ENCODE measurements at regions of chr6 and their contacts with region 1.

Region 1: DNA sequence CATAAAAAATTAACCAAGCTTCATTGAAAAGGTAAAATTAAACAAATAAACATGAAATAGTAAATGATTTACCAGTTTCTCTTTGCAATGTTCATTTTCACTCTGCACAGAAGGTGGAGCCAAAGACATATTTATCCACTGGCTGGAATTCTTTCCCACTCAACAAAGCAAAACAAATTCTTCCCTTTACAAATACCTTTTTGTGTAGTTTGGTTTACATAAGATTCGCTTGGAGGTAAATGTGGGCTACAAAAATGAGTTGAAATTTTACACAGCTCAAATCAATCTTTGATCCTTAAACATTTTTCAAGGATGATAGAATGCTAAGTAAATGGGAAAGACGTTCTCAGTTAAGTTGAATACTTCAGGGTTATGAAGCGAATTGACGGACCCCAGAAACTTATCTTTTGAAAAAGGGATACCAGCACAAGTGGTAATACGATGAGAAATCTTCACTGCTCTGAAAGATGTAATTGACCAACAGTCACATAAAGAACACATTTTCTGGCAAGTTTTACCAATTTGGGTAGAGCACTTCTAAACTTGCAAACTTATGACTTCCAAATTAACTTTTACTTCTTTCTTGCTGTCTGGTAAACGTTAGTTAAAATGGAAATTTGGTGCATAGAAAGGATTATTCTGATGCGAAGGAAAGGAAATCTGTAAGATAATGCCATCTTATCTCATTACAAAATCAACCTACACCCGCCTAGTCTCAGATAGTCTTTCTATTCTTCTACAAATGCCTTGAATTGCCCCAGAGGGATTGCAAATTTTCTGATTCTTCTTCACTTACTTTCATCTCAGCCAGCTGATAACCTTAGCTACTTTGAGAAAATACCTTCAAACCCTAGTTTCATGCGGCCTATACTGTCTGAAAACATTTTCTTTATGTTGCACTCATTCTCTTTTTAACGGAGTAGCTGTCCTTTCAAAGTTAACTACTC is 4.7 kb upstream of the GJA1 start:
- DNase-seq: no peak
- H3K4me3 ChIP-seq: no peak overlapping the region
- H3K27ac ChIP-seq: no peak overlapping the region
- H3K4me1 ChIP-seq: peaks cover 0 to 6% (median 0%) of the 10 kb centered on the region in 4 donors
- H3K27me3 ChIP-seq: peaks cover 0 to 23% (median 0%) of the 10 kb centered on the region in 3 donors
- CTCF ChIP-seq: peak; percentile 44 to 60 (median 53)
- EP300 ChIP-seq: no peak
- POLR2A ChIP-seq: no peak

Region 2: DNA sequence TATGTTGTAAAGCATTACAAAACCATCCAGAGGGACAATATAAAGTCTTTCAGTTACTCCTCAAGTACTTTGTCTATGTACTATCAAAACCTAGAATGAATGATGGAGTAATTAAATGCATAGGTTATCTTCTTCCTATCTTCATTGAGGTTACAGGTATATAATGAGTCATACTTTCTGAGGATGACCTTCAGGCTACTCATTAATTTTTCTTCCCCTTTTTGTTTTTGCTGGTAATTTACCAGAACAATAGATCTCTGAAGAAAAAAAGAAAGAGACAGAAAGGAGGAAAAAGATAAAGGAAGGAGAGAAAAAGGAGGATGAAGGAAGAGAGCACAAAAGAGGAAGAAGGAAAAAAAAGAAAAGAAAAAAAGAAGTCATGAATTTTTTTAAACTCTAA is 494.9 kb before region 1 on chr6:
- intact Hi-C with region 1: no loop called
- DNase-seq: no peak
- H3K4me3 ChIP-seq: no peak overlapping the region
- H3K27ac ChIP-seq: no peak overlapping the region
- H3K4me1 ChIP-seq: no peaks in the 10 kb centered on the region
- H3K27me3 ChIP-seq: no peaks in the 10 kb centered on the region
- CTCF ChIP-seq: no peak
- EP300 ChIP-seq: no peak
- POLR2A ChIP-seq: no peak

Region 3: DNA sequence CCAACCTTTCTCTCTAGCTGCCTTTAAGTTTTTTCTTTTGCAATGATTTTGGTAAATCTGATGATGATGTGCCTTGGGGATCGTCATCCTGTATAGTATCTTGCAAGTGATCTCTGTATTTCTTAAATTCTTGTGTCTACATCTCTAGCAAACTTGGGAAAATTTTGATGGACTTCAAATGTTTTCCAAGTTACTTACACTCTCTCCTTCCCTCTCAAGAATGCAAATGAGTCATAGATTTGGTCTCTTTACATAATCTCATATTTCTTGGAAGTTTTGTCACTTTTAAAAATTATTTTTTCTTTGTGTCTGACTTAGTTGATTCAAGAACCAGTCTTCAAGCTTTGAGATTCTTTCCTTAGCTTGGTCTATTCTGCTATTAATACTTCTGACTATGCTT is 272.9 kb before region 1 on chr6:
- intact Hi-C with region 1: no loop called
- DNase-seq: no peak
- H3K4me3 ChIP-seq: no peak overlapping the region
- H3K27ac ChIP-seq: no peak overlapping the region
- H3K4me1 ChIP-seq: no peaks in the 10 kb centered on the region
- H3K27me3 ChIP-seq: no peaks in the 10 kb centered on the region
- CTCF ChIP-seq: no peak
- EP300 ChIP-seq: no peak
- POLR2A ChIP-seq: no peak

Region 4: GRCh38 chr6:121652726-121653623 is 222.2 kb after region 1 on chr6:
- intact Hi-C with region 1: loop called (anchors 10 kb)
- DNase-seq: peak; percentile 67
- H3K4me3 ChIP-seq: no peak overlapping the region
- H3K27ac ChIP-seq: peak overlapping the region in 1 of 4 donors; percentile 58
- H3K4me1 ChIP-seq: no peaks in the 10 kb centered on the region
- H3K27me3 ChIP-seq: no peaks in the 10 kb centered on the region
- CTCF ChIP-seq: no peak
- EP300 ChIP-seq: no peak
- POLR2A ChIP-seq: no peak

Region 5: GRCh38 chr6:121851056-121851455 is 420.3 kb after region 1 on chr6:
- intact Hi-C with region 1: loop called (anchors 5 kb)
- DNase-seq: no peak
- H3K4me3 ChIP-seq: no peak overlapping the region
- H3K27ac ChIP-seq: no peak overlapping the region
- H3K4me1 ChIP-seq: no peaks in the 10 kb centered on the region
- H3K27me3 ChIP-seq: no peaks in the 10 kb centered on the region
- CTCF ChIP-seq: no peak
- EP300 ChIP-seq: no peak
- POLR2A ChIP-seq: no peak

Region 6: GRCh38 chr6:122033539-122034181 is 602.9 kb after region 1 on chr6:
- intact Hi-C with region 1: loop called (anchors 2 kb)
- DNase-seq: no peak
- H3K4me3 ChIP-seq: no peak overlapping the region
- H3K27ac ChIP-seq: no peak overlapping the region
- H3K4me1 ChIP-seq: no peaks in the 10 kb centered on the region
- H3K27me3 ChIP-seq: no peaks in the 10 kb centered on the region
- CTCF ChIP-seq: peak; percentile 43 to 60 (median 55)
- EP300 ChIP-seq: no peak
- POLR2A ChIP-seq: no peak

Region 7: GRCh38 chr6:122184401-122184827 is 753.6 kb after region 1 on chr6:
- intact Hi-C with region 1: loop called (anchors 2 kb)
- DNase-seq: no peak
- H3K4me3 ChIP-seq: no peak overlapping the region
- H3K27ac ChIP-seq: peak overlapping the region in 1 of 4 donors; percentile 15
- H3K4me1 ChIP-seq: no peaks in the 10 kb centered on the region
- H3K27me3 ChIP-seq: no peaks in the 10 kb centered on the region
- CTCF ChIP-seq: peak in 3 of 4 experiments; percentile 14 to 49 (median 40)
- EP300 ChIP-seq: no peak
- POLR2A ChIP-seq: no peak

Region 8: GRCh38 chr6:122372647-122373046 is 941.9 kb after region 1 on chr6:
- intact Hi-C with region 1: loop called (anchors 10 kb)
- DNase-seq: no peak
- H3K4me3 ChIP-seq: no peak overlapping the region
- H3K27ac ChIP-seq: no peak overlapping the region
- H3K4me1 ChIP-seq: no peaks in the 10 kb centered on the region
- H3K27me3 ChIP-seq: no peaks in the 10 kb centered on the region
- CTCF ChIP-seq: no peak
- EP300 ChIP-seq: no peak
- POLR2A ChIP-seq: no peak

Measured in sigmoid colon (tissue), 7 donors.